ENCODE measurements at regions of chr3 and their contacts with region 1.

Region 1: DNA sequence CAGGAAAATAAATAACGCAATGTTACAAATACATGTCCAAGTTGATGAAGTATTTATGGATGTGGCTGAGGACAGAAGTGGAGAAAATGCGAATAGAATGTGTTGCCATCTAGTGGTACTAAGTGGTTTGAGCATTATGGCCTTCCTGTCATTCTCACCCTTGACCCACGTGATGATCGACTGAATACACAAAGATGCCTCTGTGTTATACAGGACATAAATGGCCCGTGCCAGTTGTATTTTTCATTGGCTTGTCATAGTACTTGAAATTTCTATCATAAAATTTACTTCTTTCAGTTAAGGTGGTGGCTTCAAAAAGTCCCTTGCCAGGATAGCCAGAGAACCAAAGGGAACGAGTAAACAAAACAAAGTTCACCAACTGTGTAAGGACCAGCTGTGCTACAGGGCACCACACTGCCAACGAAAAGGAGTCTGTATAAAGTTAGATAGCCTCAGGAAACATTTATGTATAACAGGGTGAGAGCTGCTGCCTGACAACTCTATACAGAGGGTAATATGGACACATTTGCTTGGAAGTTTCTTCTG is 103.7 kb downstream of the MYH15 start:
- DNase-seq: no peak
- H3K4me3 Mint-ChIP-seq: no peak overlapping the region
- H3K27ac Mint-ChIP-seq: no peak overlapping the region
- H3K4me1 Mint-ChIP-seq: peaks cover 3% of the 10 kb centered on the region
- H3K27me3 Mint-ChIP-seq: peaks cover 2% of the 10 kb centered on the region

Region 2: GRCh38 chr3:107727102-107727501 is 679.6 kb before region 1 on chr3:
- CTCF ChIA-PET with region 1: no interaction called
- POLR2A ChIA-PET with region 1: no interaction called
- DNase-seq: no peak
- H3K4me3 Mint-ChIP-seq: no peak overlapping the region
- H3K27ac Mint-ChIP-seq: no peak overlapping the region
- H3K4me1 Mint-ChIP-seq: no peaks in the 10 kb centered on the region
- H3K27me3 Mint-ChIP-seq: no peaks in the 10 kb centered on the region

Region 3: GRCh38 chr3:108153451-108153981 is 253.2 kb before region 1 on chr3:
- CTCF ChIA-PET with region 1: interaction called, 26 read pairs
- POLR2A ChIA-PET with region 1: no interaction called
- DNase-seq: peak; percentile 63
- H3K4me3 Mint-ChIP-seq: no peak overlapping the region
- H3K27ac Mint-ChIP-seq: no peak overlapping the region
- H3K4me1 Mint-ChIP-seq: peaks cover 7% of the 10 kb centered on the region
- H3K27me3 Mint-ChIP-seq: no peaks in the 10 kb centered on the region

Region 4: GRCh38 chr3:108448593-108448992 is 41.9 kb after region 1 on chr3:
- CTCF ChIA-PET with region 1: no interaction called
- POLR2A ChIA-PET with region 1: no interaction called
- DNase-seq: no peak
- H3K4me3 Mint-ChIP-seq: no peak overlapping the region
- H3K27ac Mint-ChIP-seq: no peak overlapping the region
- H3K4me1 Mint-ChIP-seq: no peaks in the 10 kb centered on the region
- H3K27me3 Mint-ChIP-seq: peaks cover 6% of the 10 kb centered on the region

Region 5: DNA sequence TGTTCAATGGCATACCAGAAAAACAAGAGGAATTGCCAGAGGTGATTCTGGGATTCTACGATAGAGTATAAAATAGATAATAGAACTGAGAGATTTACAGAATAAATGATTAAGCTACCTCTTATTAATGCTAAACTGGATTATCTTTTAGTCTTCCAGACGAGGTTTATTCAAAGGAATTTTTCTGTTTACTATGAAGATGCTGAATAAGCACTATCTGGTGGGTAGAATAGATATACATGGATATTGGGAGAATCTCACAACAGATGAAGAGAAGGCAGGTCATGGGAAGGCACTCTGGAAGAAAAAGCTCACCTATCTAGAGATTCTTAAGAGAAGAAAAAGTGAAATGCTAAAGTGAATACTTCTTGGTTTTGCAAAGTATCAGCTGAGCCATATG is 171.3 kb after region 1 on chr3:
- CTCF ChIA-PET with region 1: no interaction called
- POLR2A ChIA-PET with region 1: no interaction called
- DNase-seq: no peak
- H3K4me3 Mint-ChIP-seq: no peak overlapping the region
- H3K27ac Mint-ChIP-seq: no peak overlapping the region
- H3K4me1 Mint-ChIP-seq: peaks cover 15% of the 10 kb centered on the region
- H3K27me3 Mint-ChIP-seq: no peaks in the 10 kb centered on the region